Mammary epithelial cell (primary cell): ENCODE measurements at regions of chr1 and their contacts with region 1.

Region 1: DNA sequence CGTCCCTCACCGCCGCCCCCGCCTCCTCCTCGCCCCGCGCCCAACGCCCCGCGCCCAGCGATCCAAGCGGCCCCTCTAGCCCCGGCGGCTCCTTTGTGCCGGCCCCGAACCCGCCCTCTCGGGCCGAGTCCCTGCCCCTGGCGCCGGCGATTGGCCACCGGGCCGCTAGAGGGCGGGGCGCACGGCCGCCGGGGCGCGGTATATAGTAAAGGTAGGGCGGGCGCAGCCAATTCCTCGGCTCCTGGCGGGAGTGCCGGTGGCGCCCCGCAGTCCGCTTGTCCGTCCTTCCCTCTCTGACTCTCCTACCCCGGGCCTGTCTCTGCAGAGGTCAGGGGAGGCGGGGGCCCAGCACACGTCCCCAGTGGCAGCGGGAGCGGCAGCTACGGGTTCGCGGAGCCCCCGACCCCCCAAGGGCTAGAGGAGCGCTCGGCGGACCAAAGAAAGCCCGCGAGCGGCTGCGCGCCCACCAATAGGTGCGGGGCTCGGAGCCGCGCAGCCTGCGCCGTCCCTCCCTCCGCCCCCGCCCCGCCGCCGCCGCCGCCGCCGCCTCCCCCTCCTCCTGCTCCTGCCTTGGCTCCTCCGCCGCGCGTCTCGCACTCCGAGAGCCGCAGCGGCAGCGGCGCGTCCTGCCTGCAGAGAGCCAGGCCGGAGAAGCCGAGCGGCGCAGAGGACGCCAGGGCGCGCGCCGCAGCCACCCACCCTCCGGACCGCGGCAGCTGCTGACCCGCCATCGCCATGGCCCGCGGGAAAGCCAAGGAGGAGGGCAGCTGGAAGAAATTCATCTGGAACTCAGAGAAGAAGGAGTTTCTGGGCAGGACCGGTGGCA is at the start of gene ATP1B1:
- DNase-seq: peak; percentile 88
- H3K4me3 ChIP-seq: peak within 1 kb of the TSS; percentile 84 to 89 (median 88)
- H3K27ac ChIP-seq: peak within 1 kb of the TSS; percentile 98
- H3K4me1 ChIP-seq: peaks cover 53% of the 10 kb centered on the region
- H3K27me3 ChIP-seq: no peaks in the 10 kb centered on the region
- CTCF ChIP-seq: peak in 1 of 2 donors; percentile 44
- total RNA-seq, gene ATP1B1: 53.2 to 117 TPM

Region 2: GRCh38 chr1:168709405-168710305 is 396.7 kb before region 1 on chr1:
- CTCF ChIA-PET with region 1: no interaction called
- dilution Hi-C with region 1: no loop called
- in situ Hi-C with region 1: no loop called
- intact Hi-C with region 1: loop called (anchors 5 kb)
- DNase-seq: peak; percentile 98
- H3K4me3 ChIP-seq: no peak overlapping the region
- H3K27ac ChIP-seq: peak overlapping the region; percentile 99
- H3K4me1 ChIP-seq: peaks cover 26% of the 10 kb centered on the region
- H3K27me3 ChIP-seq: no peaks in the 10 kb centered on the region
- CTCF ChIP-seq: peak in 1 of 2 donors; percentile 9

Region 3: DNA sequence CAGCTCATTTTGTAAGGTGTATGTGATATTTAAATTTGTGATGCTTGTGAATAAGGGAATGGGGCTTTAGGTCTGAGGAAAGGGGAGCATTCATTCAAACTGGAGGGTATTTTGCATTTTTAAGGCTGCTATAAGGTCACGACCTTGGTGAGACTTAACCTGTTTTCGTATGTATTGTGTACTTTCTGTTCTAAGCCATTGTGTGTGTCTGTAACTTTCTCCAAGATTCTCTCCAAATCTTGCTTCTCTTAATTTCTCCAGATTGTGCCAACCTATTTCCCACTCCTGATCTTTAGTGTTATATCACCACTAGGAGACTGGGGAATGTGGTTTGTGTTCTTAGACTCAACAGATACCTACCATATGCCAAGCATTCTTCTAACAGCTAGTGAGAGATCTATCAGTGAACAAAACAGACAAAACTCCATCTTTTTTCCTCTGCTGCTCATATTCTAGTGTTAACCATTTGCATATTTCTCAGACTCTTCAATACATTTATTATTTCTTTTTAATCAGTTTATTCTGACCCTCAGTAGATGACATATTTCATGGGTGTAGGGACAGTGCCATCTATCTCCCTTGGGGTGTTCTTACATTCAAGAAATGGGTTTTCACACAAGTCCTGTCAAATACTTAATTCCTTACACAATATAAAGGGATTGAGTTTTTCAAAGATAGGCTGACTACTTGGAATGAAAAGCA is 27.6 kb after region 1 on chr1:
- CTCF ChIA-PET with region 1: no interaction called
- dilution Hi-C with region 1: no loop called
- in situ Hi-C with region 1: no loop called
- intact Hi-C with region 1: loop called (anchors 2 kb)
- DNase-seq: no peak
- H3K4me3 ChIP-seq: no peak overlapping the region
- H3K27ac ChIP-seq: no peak overlapping the region
- H3K4me1 ChIP-seq: peaks cover 13% of the 10 kb centered on the region
- H3K27me3 ChIP-seq: no peaks in the 10 kb centered on the region
- CTCF ChIP-seq: peak; percentile 61 to 74

Region 4: DNA sequence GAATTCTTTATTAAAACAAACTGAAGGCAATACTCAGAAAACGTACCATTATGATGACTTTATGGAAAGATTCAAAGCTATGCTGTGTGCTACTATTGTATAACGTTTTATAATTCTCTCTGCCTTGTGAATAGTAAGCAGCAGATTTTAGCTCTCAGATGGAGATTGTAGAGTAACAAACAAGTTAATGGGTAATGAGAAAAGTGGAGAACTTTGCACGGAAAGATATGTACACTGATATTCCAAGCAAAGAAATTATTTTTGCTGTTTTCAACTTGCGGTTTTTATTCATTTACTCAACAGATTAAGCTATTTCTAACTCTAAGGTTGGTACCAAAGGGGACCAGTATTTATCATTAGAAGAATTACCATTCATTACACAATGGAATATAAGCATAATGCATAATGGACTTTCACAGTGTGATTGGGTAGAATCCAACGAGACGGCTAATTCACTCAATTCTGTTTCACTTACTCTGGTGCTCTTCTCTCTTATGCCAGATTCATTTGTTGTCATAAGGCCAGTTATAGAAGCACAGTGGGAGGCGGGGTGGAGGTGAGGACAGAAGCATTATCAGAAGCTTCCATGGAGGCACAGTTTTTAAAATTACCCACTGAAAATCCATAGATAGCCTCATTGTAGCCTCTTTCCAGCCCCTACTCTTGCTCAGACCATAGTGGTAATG is 38.8 kb after region 1 on chr1:
- CTCF ChIA-PET with region 1: no interaction called
- dilution Hi-C with region 1: no loop called
- in situ Hi-C with region 1: no loop called
- intact Hi-C with region 1: no loop called
- DNase-seq: no peak
- H3K4me3 ChIP-seq: no peak overlapping the region
- H3K27ac ChIP-seq: no peak overlapping the region
- H3K4me1 ChIP-seq: no peaks in the 10 kb centered on the region
- H3K27me3 ChIP-seq: no peaks in the 10 kb centered on the region
- CTCF ChIP-seq: no peak

Region 5: GRCh38 chr1:169546087-169546995 is 440.0 kb after region 1 on chr1:
- CTCF ChIA-PET with region 1: no interaction called
- dilution Hi-C with region 1: no loop called
- in situ Hi-C with region 1: no loop called
- intact Hi-C with region 1: loop called (anchors 2 kb)
- DNase-seq: peak; percentile 59
- H3K4me3 ChIP-seq: no peak overlapping the region
- H3K27ac ChIP-seq: no peak overlapping the region
- H3K4me1 ChIP-seq: no peaks in the 10 kb centered on the region
- H3K27me3 ChIP-seq: no peaks in the 10 kb centered on the region
- CTCF ChIP-seq: peak; percentile 76 to 85